ENCODE measurements at regions of chr16 and their contacts with region 1.

Region 1: DNA sequence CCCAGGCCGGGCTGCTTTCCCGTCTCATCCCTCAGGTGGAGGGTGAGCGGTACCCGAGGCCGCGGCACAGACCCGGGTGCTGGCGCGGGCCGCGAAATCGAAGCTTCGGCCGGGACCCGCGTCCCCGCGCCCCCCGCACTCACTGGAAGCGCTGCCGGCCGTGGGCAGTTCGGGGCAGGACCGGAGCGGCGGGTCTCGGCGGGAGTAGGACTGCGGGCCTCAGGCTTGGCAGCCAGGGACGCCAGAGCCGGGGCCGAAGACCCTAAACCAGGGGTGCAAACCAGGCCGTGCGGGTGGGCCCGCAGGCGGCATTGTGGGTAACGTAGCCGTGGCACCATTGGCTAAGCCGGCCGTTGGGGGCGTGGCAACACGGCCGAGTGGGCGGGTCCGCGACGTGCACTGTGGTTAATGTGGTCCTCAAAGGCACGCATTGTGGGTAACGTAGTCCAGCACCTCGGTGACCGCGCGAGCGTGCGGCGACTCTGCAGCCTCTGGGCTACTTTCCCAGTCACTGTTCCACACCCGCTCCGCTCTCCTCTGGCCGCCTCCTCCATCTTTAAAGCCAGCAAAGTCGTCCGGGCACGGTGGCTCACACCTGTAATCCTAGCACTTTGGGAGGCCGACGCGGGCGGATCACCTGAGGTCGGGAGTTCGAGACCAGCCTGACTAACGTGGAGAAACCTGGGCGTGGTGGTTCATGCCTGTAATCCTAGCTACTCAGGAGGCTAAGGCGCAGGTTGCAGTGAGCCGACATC is at the start of gene ZNF500:
- DNase-seq: peak; percentile 90
- ATAC-seq: peak; percentile 87
- H3K4me3 ChIP-seq: peak within 1 kb of the TSS; percentile 92 to 93
- H3K27ac ChIP-seq: peak within 1 kb of the TSS; percentile 56
- H3K4me1 ChIP-seq: peaks cover 12 to 23% of the 10 kb centered on the region in 2 experiments
- H3K27me3 ChIP-seq: no peaks in the 10 kb centered on the region
- CTCF ChIP-seq: no peak
- POLR2A ChIP-seq: peak; percentile 81
- RAD21 ChIP-seq: no peak
- total RNA-seq, gene ZNF500: 20.1 TPM

Region 2: DNA sequence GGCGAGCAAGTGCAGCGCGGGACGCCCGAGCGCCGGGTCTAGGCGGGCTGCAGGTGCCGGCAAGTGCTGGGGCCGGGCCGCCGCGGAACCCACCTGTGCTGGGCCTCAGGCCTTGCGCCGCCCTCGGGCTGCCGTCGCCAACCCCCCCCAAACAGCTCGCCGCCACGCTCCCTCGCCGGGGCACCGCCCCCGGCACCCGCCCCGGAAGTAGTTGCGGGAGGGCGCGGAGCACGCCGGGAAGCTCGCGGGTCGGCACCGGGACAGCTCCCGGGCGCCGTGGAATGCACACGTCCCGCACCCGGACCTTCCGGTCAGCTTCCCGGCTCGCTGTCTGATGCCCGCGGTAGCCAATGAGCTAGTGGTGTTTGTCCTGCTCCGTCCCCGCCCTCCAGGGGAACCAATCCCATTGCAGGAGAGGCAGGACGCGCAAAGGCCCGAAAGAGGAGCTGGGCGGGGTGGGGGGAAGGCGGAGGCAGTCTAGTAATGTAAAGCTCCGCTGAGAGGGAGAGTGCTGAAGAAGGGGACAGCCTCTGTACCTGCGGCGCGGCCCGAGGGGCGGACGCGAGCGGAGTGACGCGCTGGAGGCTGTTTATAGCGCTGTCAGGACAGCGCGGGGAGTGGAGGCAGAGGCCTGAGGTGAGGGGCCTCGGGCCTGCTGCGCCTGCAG is 32.9 kb before region 1 on chr16 and contains the starts of genes ANKS3 and DNAAF8:
- CTCF ChIA-PET with region 1: no interaction called
- POLR2A ChIA-PET with region 1: interaction called, 8 read pairs
- RAD21 ChIA-PET with region 1: no interaction called
- intact Hi-C with region 1: loop called (anchors 2 kb)
- DNase-seq: peak; percentile 92
- ATAC-seq: peak; percentile 94
- H3K4me3 ChIP-seq: peak within 1 kb of the TSS; percentile 97
- H3K27ac ChIP-seq: peak within 1 kb of the TSS; percentile 83
- H3K4me1 ChIP-seq: peaks cover 8 to 19% of the 10 kb centered on the region in 2 experiments
- H3K27me3 ChIP-seq: no peaks in the 10 kb centered on the region
- CTCF ChIP-seq: no peak
- POLR2A ChIP-seq: peak; percentile 57
- RAD21 ChIP-seq: no peak
- total RNA-seq, gene ANKS3: 25.5 TPM
- total RNA-seq, gene DNAAF8: 1.0 TPM

Region 3: GRCh38 chr16:4846891-4847773 is 80.1 kb after region 1 on chr16 and contains the starts of genes GLYR1 and UBN1:
- CTCF ChIA-PET with region 1: no interaction called
- POLR2A ChIA-PET with region 1: no interaction called
- RAD21 ChIA-PET with region 1: no interaction called
- intact Hi-C with region 1: loop called (anchors 1 kb)
- DNase-seq: peak; percentile 86
- ATAC-seq: peak; percentile 89
- H3K4me3 ChIP-seq: peak within 1 kb of the TSS; percentile 90 to 92
- H3K27ac ChIP-seq: peak within 1 kb of the TSS; percentile 91
- H3K4me1 ChIP-seq: peaks cover 13 to 35% of the 10 kb centered on the region in 2 experiments
- H3K27me3 ChIP-seq: no peaks in the 10 kb centered on the region
- CTCF ChIP-seq: no peak
- POLR2A ChIP-seq: peak; percentile 55
- RAD21 ChIP-seq: no peak
- total RNA-seq, gene GLYR1: 50.0 TPM
- total RNA-seq, gene UBN1: 31.9 TPM

Region 4: GRCh38 chr16:5056352-5056751 is 289.3 kb after region 1 on chr16:
- CTCF ChIA-PET with region 1: no interaction called
- POLR2A ChIA-PET with region 1: no interaction called
- RAD21 ChIA-PET with region 1: no interaction called
- intact Hi-C with region 1: no loop called
- DNase-seq: peak; percentile 37
- ATAC-seq: peak; percentile 96
- H3K4me3 ChIP-seq: no peak overlapping the region
- H3K27ac ChIP-seq: no peak overlapping the region
- H3K4me1 ChIP-seq: peaks cover 0 to 5% of the 10 kb centered on the region in 2 experiments; a peak in 1 of 4 replicates
- H3K27me3 ChIP-seq: no peaks in the 10 kb centered on the region
- CTCF ChIP-seq: peak; percentile 44 to 86 (median 82); a peak in 5 of 6 replicates
- POLR2A ChIP-seq: no peak
- RAD21 ChIP-seq: peak; percentile 64